ENCODE measurements at regions of chr20 and their contacts with region 1.

Region 1: GRCh38 chr20:6026051-6026450 is 27.8 kb downstream of the LRRN4 start:
- DNase-seq: no peak
- ATAC-seq: no peak
- H3K4me3 Mint-ChIP-seq: no peak overlapping the region
- H3K27ac Mint-ChIP-seq: no peak overlapping the region
- H3K4me1 Mint-ChIP-seq: no peaks in the 10 kb centered on the region
- H3K27me3 Mint-ChIP-seq: no peaks in the 10 kb centered on the region
- CTCF ChIP-seq: no peak

Region 2: DNA sequence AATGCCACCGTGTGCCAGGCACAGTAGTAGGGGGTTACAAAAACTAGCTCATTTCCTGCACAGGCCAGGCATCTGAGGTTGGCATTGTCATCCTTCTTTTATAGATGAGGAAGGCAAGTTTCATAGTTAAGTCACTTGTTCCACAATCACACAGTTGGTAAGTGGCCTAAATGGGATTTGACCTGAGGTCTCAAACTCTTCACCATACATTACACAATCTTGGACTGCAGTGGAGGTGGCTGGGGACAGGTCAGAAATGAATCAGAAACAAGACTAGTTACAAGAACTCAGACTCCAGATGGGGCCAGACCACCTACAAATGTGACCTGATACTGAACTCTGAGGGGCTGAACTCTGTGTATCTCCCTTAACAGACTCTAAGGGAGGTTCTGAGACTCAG is 125.1 kb before region 1 on chr20:
- CTCF ChIA-PET with region 1: no interaction called
- POLR2A ChIA-PET with region 1: no interaction called
- DNase-seq: no peak
- ATAC-seq: no peak
- H3K4me3 Mint-ChIP-seq: no peak overlapping the region
- H3K27ac Mint-ChIP-seq: no peak overlapping the region
- H3K4me1 Mint-ChIP-seq: no peaks in the 10 kb centered on the region
- H3K27me3 Mint-ChIP-seq: peaks cover 13% of the 10 kb centered on the region
- CTCF ChIP-seq: no peak

Region 3: GRCh38 chr20:6058684-6059295 is 32.7 kb after region 1 on chr20:
- CTCF ChIA-PET with region 1: no interaction called
- POLR2A ChIA-PET with region 1: interaction called, 15 read pairs
- DNase-seq: no peak
- ATAC-seq: no peak
- H3K4me3 Mint-ChIP-seq: no peak overlapping the region
- H3K27ac Mint-ChIP-seq: no peak overlapping the region
- H3K4me1 Mint-ChIP-seq: peaks cover 15% of the 10 kb centered on the region
- H3K27me3 Mint-ChIP-seq: peaks cover 19% of the 10 kb centered on the region
- CTCF ChIP-seq: no peak

Measured in WTC11 (cell line).